Posterior cingulate gyrus (tissue), 11 donors: ENCODE measurements at regions of chr6 and their contacts with region 1.

Region 1: GRCh38 chr6:105402939-105403935 is at the start of gene PREP:
- DNase-seq: peak; percentile 68 to 97 (median 84)

Region 2: GRCh38 chr6:105087571-105088211 is 315.5 kb before region 1 on chr6:
- intact Hi-C with region 1: loop called (anchors 1 kb)
- DNase-seq: peak in 4 of 10 donors; percentile 12 to 42 (median 22)

Region 3: GRCh38 chr6:105179244-105180065 is 223.8 kb before region 1 on chr6 and contains the start of gene POPDC3:
- intact Hi-C with region 1: loop called (anchors 5 kb)
- DNase-seq: peak in 7 of 10 donors; percentile 13 to 88 (median 27)

Region 4: GRCh38 chr6:105363100-105363754 is 40.0 kb before region 1 on chr6:
- intact Hi-C with region 1: loop called (anchors 5 kb)
- DNase-seq: peak in 1 of 10 donors; percentile 74